WTC11 (cell line): ENCODE measurements at regions of chr10 and their contacts with region 1.

Region 1: DNA sequence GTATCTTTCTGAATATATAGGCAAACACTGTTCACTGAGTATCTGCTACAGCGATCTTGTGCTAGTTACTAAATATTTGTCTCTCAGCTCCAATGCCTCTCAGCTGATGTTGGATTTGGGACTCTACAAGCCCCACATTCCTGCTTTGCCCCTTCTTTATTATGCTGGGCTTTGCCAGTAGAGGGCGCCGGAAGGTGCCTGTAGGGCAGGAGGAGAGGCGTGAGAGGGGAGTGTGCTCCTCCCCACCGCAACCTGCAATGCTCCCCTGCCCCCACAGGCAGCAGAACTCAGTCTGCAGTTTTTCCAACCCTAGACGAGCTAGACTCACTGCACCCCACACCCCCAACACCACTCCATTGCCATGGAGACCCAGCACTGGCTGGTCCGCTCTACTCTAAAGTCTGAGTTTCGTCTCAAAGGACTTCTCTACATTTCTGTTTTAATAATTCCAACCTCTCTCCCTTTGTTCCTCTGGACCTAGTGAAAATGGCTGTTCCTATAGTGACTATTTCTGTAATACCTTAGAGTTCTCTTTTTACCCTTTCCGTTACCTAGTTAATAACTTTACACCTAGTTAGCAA is 337.6 kb downstream of the CCSER2 start:
- DNase-seq: peak; percentile 91
- ATAC-seq: peak; percentile 98
- H3K4me3 Mint-ChIP-seq: no peak overlapping the region
- H3K27ac Mint-ChIP-seq: no peak overlapping the region
- H3K4me1 Mint-ChIP-seq: peaks cover 15% of the 10 kb centered on the region
- H3K27me3 Mint-ChIP-seq: no peaks in the 10 kb centered on the region
- CTCF ChIP-seq: peak; percentile 74

Region 2: DNA sequence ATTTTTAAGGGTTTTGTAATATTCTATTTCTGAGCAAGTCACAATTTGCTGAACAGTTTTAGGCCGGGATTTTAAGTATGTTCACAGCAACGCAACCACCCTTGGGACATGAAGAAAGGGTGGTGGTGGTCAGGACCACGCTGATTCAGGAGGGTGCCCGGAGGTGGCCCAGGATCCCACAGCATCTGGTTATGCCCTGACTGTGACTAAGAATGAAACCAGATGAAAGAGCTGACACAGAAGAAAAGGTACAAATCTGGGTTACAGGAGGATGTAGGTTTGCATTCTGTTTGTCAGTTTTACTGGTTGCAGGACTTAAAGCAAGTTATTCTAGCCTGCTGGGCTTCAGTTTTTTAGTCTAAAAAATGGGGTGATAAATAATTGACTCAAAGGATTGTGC is 57.8 kb before region 1 on chr10:
- CTCF ChIA-PET with region 1: interaction called, 52 read pairs
- POLR2A ChIA-PET with region 1: no interaction called
- DNase-seq: no peak
- ATAC-seq: no peak
- H3K4me3 Mint-ChIP-seq: no peak overlapping the region
- H3K27ac Mint-ChIP-seq: no peak overlapping the region
- H3K4me1 Mint-ChIP-seq: peaks cover 21% of the 10 kb centered on the region
- H3K27me3 Mint-ChIP-seq: no peaks in the 10 kb centered on the region; the same call in 1 of the 2 replicates
- CTCF ChIP-seq: no peak

Region 3: DNA sequence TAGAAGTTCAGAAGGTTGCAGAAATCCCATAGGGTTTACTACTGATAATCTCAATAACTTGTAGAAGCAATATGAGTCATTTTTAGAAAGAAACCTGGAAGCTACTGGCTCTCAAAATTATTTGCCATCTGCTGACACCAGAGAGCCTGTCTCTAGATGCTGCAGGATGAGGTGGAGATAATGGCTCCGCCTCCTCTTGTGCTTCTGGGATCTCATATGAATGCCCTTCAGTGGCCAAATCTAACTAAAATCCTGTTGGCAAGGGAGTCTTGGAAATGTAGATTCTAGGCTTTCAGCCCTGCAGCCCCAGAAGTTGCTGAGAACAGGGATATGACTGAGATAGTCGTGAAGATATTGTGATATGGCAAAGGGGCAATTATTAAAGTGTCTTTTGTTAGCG is 10.6 kb after region 1 on chr10:
- CTCF ChIA-PET with region 1: interaction called, 10 read pairs
- POLR2A ChIA-PET with region 1: no interaction called
- DNase-seq: no peak
- ATAC-seq: peak; percentile 60
- H3K4me3 Mint-ChIP-seq: no peak overlapping the region
- H3K27ac Mint-ChIP-seq: no peak overlapping the region
- H3K4me1 Mint-ChIP-seq: peaks cover 6% of the 10 kb centered on the region
- H3K27me3 Mint-ChIP-seq: no peaks in the 10 kb centered on the region
- CTCF ChIP-seq: no peak

Region 4: DNA sequence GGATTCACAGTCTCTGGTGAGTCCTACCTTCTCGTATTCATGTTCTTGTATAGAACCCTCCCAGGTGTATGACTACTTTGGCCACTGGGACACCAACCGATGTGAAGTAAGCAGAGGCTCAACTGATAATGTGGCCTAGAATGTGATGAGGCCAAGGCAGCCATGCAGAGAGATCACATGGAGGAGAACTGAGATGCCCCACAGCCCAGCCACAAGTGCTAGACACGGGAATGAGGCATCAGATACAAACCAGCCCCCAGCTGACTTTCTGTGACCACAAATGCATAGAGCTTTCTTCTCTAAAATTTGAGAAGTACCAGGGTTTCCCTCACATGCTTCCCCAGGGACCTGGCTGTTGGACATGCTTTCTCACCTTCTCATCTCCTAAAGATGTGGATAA is 38.1 kb after region 1 on chr10:
- CTCF ChIA-PET with region 1: interaction called, 10 read pairs
- POLR2A ChIA-PET with region 1: no interaction called
- DNase-seq: no peak
- ATAC-seq: no peak
- H3K4me3 Mint-ChIP-seq: no peak overlapping the region
- H3K27ac Mint-ChIP-seq: no peak overlapping the region
- H3K4me1 Mint-ChIP-seq: peaks cover 8% of the 10 kb centered on the region
- H3K27me3 Mint-ChIP-seq: no peaks in the 10 kb centered on the region
- CTCF ChIP-seq: no peak

Region 5: GRCh38 chr10:84739641-84740040 is 73.7 kb after region 1 on chr10:
- CTCF ChIA-PET with region 1: interaction called, 10 read pairs
- POLR2A ChIA-PET with region 1: no interaction called
- DNase-seq: no peak
- ATAC-seq: peak; percentile 56; the same call in 1 of the 2 replicates
- H3K4me3 Mint-ChIP-seq: no peak overlapping the region
- H3K27ac Mint-ChIP-seq: no peak overlapping the region
- H3K4me1 Mint-ChIP-seq: no peaks in the 10 kb centered on the region
- H3K27me3 Mint-ChIP-seq: no peaks in the 10 kb centered on the region
- CTCF ChIP-seq: no peak